ENCODE measurements at regions of chr10 and their contacts with region 1.

Region 1: GRCh38 chr10:32445740-32446535 is at the start of gene CCDC7:
- DNase-seq: peak; percentile 89 to 96 (median 96)
- ATAC-seq: peak; percentile 99
- H3K4me3 ChIP-seq: peak within 1 kb of the TSS; percentile 96
- H3K27ac ChIP-seq: peak within 1 kb of the TSS; percentile 100
- H3K4me1 ChIP-seq: peaks cover 2% of the 10 kb centered on the region
- H3K27me3 ChIP-seq: no peaks in the 10 kb centered on the region
- total RNA-seq, gene CCDC7: 25.4 to 38.7 (median 34.9) TPM

Region 2: GRCh38 chr10:32378363-32379317 is 67.3 kb before region 1 on chr10:
- intact Hi-C with region 1: loop called in 3 of 4 experiments (anchors 5 to 10 kb)
- DNase-seq: peak; percentile 95 to 98 (median 97)
- ATAC-seq: peak; percentile 99
- H3K4me3 ChIP-seq: peak overlapping the region; percentile 100
- H3K27ac ChIP-seq: peak overlapping the region; percentile 97
- H3K4me1 ChIP-seq: no peaks in the 10 kb centered on the region
- H3K27me3 ChIP-seq: no peaks in the 10 kb centered on the region

Region 3: DNA sequence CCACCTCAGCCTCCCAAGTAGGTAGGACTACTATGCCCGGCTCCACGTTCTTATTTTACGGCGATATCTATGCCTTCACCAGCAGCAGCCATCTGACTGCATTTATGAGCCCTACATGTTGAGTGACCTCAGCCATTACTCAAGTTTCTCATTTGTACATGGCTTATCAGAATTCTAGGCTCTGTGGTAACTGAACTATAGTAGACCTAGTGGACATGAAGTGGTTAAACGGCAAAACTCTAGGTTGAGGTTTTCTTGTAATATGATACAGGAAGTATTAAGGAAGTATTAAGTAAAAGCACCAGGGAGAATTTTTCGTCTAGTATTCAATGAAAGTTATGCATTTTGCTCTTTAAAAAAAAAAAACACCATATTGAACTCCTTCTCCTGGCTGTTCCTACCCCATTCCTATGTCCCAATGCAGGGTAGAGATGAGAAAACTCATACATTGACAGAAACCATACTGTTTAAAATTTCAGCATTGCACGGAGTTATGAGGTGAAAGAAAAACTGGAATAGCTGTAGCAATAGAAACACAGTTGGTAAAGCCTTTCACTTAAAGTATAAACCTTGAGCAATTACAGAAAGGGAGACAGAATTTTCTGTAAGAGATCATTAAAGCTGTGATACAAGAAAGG is 59.2 kb before region 1 on chr10:
- intact Hi-C with region 1: loop called in 1 of 4 experiments (anchors 10 kb)
- DNase-seq: no peak
- ATAC-seq: no peak
- H3K4me3 ChIP-seq: no peak overlapping the region
- H3K27ac ChIP-seq: no peak overlapping the region
- H3K4me1 ChIP-seq: no peaks in the 10 kb centered on the region
- H3K27me3 ChIP-seq: no peaks in the 10 kb centered on the region

Region 4: GRCh38 chr10:32471232-32471631 is 25.3 kb after region 1 on chr10:
- intact Hi-C with region 1: no loop called
- DNase-seq: no peak
- ATAC-seq: no peak
- H3K4me3 ChIP-seq: no peak overlapping the region
- H3K27ac ChIP-seq: no peak overlapping the region
- H3K4me1 ChIP-seq: no peaks in the 10 kb centered on the region
- H3K27me3 ChIP-seq: no peaks in the 10 kb centered on the region